Dorsolateral prefrontal cortex (tissue), 120 donors: ENCODE measurements at regions of chr7 and their contacts with region 1.

Region 1: DNA sequence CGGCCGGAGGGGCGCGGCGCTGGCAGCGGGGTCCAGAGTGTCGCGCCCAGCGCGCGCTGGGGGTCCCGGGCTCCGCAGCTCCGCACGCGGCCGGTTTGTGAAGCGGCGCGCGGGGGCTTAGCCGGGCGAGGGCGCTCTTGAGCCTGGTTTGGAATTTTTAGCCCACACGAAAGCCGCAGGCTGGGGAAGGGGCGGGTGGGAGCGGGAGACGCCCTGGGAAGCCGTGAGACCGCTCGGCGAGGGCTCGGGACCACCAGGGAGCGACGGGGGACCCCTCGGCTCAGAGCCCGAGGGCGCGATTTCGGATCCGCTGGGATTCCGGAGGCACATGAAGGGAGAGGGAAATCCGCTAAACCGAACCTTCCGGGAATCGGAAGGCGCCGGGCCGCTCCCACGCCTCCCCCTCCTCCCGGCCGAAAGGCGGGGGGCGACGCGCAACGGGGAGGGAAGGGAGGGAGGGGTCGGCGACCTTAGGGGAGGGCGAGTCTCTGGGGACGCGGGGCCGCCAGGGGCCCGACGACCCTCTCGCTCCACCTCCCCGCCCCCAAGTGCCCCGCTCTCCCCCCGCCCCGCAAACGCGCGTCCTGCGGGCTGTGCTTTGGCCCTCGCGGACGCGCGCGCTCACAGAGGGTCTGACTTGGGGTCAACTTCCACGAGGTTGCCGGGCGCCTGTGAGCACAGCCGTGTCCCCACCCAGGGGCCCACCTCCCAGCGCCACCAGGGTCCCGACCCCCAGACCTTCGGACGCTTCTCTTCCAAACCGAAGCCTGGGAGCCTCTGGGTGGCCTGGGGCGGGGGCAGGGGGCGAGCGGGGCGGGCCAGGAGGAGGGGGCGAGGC is 5.1 kb upstream of the ELFN1 start:
- DNase-seq: peak; percentile 38 to 76 (median 52)
- H3K4me3 ChIP-seq: peak overlapping the region; percentile 43 to 78 (median 63)
- H3K27ac ChIP-seq: peak overlapping the region in 11 of 59 donors; percentile 21 to 80 (median 53)
- H3K27me3 ChIP-seq: peaks cover 0 to 63% (median 43%) of the 10 kb centered on the region in 45 donors
- CTCF ChIP-seq: peak; percentile 25 to 85 (median 66)

Region 2: GRCh38 chr7:1709900-1710299 is 45.0 kb after region 1 on chr7:
- intact Hi-C with region 1: no loop called
- DNase-seq: no peak
- H3K4me3 ChIP-seq: no peak overlapping the region
- H3K27ac ChIP-seq: no peak overlapping the region
- H3K27me3 ChIP-seq: no peaks in the 10 kb centered on the region
- CTCF ChIP-seq: peak in 24 of 56 donors; percentile 9 to 39 (median 22)

Region 3: GRCh38 chr7:2148189-2148588 is 483.3 kb after region 1 on chr7:
- intact Hi-C with region 1: loop called in 1 of 2 experiments (anchors 10 kb)
- DNase-seq: no peak
- H3K4me3 ChIP-seq: no peak overlapping the region
- H3K27ac ChIP-seq: no peak overlapping the region
- H3K27me3 ChIP-seq: no peaks in the 10 kb centered on the region
- CTCF ChIP-seq: no peak

Region 4: GRCh38 chr7:2209146-2209960 is 544.4 kb after region 1 on chr7:
- intact Hi-C with region 1: loop called (anchors 2 to 10 kb)
- DNase-seq: peak; percentile 69 to 88 (median 82)
- H3K4me3 ChIP-seq: no peak overlapping the region
- H3K27ac ChIP-seq: peak overlapping the region in 2 of 59 donors; percentile 13 to 46
- H3K27me3 ChIP-seq: no peaks in the 10 kb centered on the region
- CTCF ChIP-seq: peak; percentile 18 to 92 (median 84)

Region 5: DNA sequence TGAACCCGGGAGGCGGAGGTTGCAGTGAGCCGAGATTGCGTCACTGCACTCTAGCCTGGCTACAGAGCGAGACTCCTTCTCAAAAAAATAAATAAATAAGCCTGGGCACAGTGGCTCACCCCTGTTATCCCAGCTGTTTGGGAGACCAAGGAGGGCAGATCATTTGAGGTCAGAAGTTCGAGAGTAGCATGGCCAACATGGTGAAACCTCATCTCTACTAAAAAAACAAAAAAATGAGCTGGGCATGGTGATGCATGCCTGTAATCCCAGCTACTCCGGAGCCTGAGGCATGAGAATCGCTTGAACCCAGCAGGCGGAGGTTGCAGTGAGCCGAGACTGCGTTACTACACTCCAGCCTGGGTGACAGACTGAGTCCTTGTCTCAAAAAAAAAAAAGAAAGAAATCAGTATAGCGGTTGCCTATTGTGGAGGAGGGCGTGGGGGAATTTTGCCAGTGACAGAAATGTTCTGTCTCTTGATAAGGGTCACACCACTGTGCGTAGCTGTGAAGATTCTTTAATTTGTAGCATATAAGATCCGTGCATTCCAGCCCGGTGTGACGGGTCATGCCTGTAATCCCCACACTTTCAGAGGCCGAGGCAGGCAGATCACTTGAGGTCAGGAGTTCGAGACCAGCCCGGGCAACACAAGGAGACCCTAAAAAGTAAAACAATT is 671.8 kb after region 1 on chr7:
- intact Hi-C with region 1: loop called in 1 of 2 experiments (anchors 5 kb)
- DNase-seq: no peak
- H3K4me3 ChIP-seq: no peak overlapping the region
- H3K27ac ChIP-seq: no peak overlapping the region
- H3K27me3 ChIP-seq: no peaks in the 10 kb centered on the region
- CTCF ChIP-seq: no peak